ENCODE measurements at regions of chr15 and their contacts with region 1.

Region 1: DNA sequence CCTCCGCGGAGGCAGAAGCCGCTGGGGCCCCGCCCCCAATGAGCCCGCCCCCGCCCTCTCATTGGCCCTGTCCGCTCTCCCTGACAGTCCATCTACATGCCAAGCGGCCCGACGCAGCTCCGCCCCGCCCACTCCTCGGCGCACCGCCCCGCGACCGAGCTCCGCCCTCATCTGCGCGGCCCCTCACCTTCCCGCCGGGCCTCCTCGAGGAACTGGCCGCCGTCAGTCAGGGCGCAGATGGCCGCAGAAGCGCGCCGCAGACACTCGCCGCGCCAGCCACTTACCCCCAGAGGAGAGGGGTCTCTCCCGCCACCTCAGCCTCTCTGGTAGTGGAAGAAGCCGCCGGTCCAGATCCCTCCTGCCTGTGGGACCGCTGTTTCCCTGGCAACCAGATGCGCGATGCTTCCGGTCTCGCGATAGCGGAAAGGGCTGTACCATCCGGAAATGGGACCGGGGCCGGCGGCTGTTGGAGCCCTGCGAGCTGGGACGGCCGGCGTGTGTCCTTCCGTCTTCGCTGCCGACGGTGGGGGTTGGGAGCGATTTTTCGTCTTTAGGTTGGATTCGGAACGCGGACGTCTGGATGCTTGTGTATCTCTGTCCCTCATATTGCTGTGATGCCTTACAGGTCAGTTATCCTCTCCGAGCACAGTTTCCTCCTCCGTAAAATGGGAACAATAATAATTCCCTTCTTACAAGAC is at the start of gene FSIP1:
- DNase-seq: peak; percentile 89 to 97 (median 93)
- ATAC-seq: peak; percentile 98
- H3K4me3 ChIP-seq: peak within 1 kb of the TSS; percentile 83
- H3K4me3 Mint-ChIP-seq: peak within 1 kb of the TSS; percentile 86
- H3K27ac ChIP-seq: peak within 1 kb of the TSS; percentile 66 to 83
- H3K27ac Mint-ChIP-seq: peak within 1 kb of the TSS; percentile 76
- H3K4me1 ChIP-seq: peaks cover 9% of the 10 kb centered on the region
- H3K4me1 Mint-ChIP-seq: peaks cover 56% of the 10 kb centered on the region
- H3K27me3 ChIP-seq: no peaks in the 10 kb centered on the region
- H3K27me3 Mint-ChIP-seq: no peaks in the 10 kb centered on the region
- CTCF ChIP-seq: no peak
- total RNA-seq, gene FSIP1: 0.22 to 0.34 TPM

Region 2: GRCh38 chr15:39874890-39875549 is 92.4 kb after region 1 on chr15:
- CTCF ChIA-PET with region 1: interaction called, 3 read pairs
- POLR2A ChIA-PET with region 1: no interaction called
- intact Hi-C with region 1: loop called (anchors 2 to 10 kb)
- DNase-seq: peak in 5 of 14 experiments; percentile 6 to 51 (median 24)
- ATAC-seq: no peak
- H3K4me3 ChIP-seq: no peak overlapping the region
- H3K4me3 Mint-ChIP-seq: no peak overlapping the region
- H3K27ac ChIP-seq: no peak overlapping the region
- H3K27ac Mint-ChIP-seq: no peak overlapping the region
- H3K4me1 ChIP-seq: no peaks in the 10 kb centered on the region
- H3K4me1 Mint-ChIP-seq: no peaks in the 10 kb centered on the region
- H3K27me3 ChIP-seq: peaks cover 0 to 8% of the 10 kb centered on the region in 2 experiments
- H3K27me3 Mint-ChIP-seq: peaks cover 4% of the 10 kb centered on the region
- CTCF ChIP-seq: peak; percentile 58

Region 3: GRCh38 chr15:39976291-39977274 is 194.0 kb after region 1 on chr15:
- CTCF ChIA-PET with region 1: no interaction called
- POLR2A ChIA-PET with region 1: no interaction called
- intact Hi-C with region 1: loop called in 1 of 2 experiments (anchors 10 kb)
- DNase-seq: peak in 6 of 14 experiments; percentile 1 to 43 (median 19)
- ATAC-seq: peak; percentile 43
- H3K4me3 ChIP-seq: peak overlapping the region; percentile 22
- H3K4me3 Mint-ChIP-seq: peak overlapping the region; percentile 77
- H3K27ac ChIP-seq: no peak overlapping the region
- H3K27ac Mint-ChIP-seq: no peak overlapping the region
- H3K4me1 ChIP-seq: no peaks in the 10 kb centered on the region
- H3K4me1 Mint-ChIP-seq: no peaks in the 10 kb centered on the region
- H3K27me3 ChIP-seq: no peaks in the 10 kb centered on the region
- H3K27me3 Mint-ChIP-seq: no peaks in the 10 kb centered on the region
- CTCF ChIP-seq: no peak

Region 4: DNA sequence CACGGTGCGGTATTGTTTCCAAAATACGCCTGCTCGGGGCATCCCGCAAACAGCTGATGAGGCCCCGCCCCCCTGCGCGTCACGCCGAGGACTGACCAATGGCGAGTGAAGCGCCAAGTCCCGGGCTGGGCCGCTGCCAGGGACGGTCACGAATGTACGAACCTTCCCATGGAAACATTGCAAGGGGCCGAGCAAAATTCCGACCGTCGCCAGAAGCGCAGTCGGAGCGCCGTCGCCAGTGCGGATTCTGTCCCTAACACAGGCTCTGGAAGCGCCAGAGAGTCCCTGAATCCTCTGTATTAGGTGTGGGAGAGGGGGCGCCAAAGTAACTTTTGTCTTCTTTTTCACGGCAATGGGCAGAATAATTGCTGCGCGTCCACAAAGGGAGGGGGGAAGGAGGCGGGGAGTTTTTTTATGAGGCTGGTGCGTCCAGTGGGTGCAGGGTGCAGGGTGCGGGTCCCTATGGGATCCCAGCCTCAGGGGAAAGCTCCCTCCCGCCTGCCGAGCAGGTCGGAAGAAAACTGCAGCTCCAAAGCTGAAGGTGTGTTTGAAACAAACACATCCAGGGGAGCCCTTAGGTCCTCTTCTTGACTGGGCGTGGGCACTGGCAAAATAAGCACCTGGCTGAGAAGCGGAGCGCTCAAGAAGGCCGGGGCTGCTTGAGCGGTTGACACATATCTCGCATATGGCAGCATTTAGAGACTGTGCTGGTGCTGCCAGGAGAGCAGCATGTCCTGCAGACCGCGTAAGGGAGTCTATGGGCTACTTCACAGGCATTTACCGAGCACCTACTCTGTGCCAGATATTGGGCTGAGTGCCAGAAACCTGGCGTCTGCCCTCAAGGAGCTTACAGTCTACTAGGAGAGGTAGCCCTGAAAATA is 326.5 kb after region 1 on chr15 and contains the start of gene BMF:
- CTCF ChIA-PET with region 1: no interaction called
- POLR2A ChIA-PET with region 1: interaction called, 3 read pairs
- intact Hi-C with region 1: loop called in 1 of 2 experiments (anchors 5 kb)
- DNase-seq: peak; percentile 93 to 99 (median 97)
- ATAC-seq: peak; percentile 80
- H3K4me3 ChIP-seq: peak within 1 kb of the TSS; percentile 88
- H3K4me3 Mint-ChIP-seq: peak within 1 kb of the TSS; percentile 89
- H3K27ac ChIP-seq: peak within 1 kb of the TSS in 1 of 2 donors; percentile 27
- H3K27ac Mint-ChIP-seq: peak within 1 kb of the TSS; percentile 58
- H3K4me1 ChIP-seq: peaks cover 51% of the 10 kb centered on the region
- H3K4me1 Mint-ChIP-seq: peaks cover 55% of the 10 kb centered on the region
- H3K27me3 ChIP-seq: no peaks in the 10 kb centered on the region
- H3K27me3 Mint-ChIP-seq: no peaks in the 10 kb centered on the region
- CTCF ChIP-seq: peak; percentile 38
- total RNA-seq, gene BMF: 13.5 to 13.9 TPM

Region 5: DNA sequence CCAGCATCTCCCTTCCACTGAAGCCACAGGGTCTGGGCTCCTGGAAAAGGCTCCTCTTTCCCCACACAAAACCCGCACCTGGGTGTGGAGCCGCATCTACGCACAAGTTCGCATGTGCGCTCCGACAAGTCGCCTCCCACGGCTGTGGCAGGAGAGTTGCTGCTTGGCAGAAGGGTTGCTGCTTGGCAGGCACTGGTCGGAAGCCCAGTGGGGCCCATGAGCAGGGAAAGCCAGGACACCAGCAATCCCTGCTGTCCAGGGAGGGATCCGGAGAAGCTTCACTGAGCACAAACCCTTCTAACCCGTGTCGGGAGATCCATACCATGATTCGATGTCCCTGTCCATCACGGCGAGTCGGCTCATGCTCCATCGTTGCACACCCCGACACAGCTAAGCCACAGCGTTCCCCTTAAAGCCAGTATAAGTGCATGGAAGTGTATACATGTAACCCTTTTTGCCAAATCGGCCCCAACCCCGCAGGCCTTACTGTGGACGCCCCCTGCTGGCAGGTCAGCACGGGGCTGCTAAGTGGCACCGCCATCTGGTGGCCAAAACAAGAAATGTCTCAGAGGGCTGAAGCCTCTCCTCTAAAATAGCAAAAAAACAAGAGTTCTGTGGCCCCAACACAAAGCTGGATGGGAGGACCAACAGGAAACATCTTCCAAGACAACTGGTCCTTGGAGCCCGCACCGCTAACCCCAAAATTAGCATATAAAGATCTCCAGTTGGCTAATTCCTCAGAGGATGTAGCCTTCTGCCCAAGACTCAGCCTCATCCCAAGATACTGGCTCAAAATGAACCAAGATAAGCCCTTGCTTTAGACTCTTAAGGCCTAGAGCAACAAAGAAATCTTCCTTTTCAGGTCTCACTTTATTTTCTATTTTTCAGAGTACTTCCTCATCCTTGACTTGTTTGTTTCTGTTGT is 492.0 kb after region 1 on chr15:
- CTCF ChIA-PET with region 1: interaction called, 6 read pairs
- POLR2A ChIA-PET with region 1: interaction called, 3 read pairs
- intact Hi-C with region 1: loop called in 1 of 2 experiments (anchors 1 kb)
- DNase-seq: peak; percentile 78 to 94 (median 86)
- ATAC-seq: peak; percentile 89
- H3K4me3 ChIP-seq: no peak overlapping the region
- H3K4me3 Mint-ChIP-seq: no peak overlapping the region
- H3K27ac ChIP-seq: no peak overlapping the region
- H3K27ac Mint-ChIP-seq: no peak overlapping the region
- H3K4me1 ChIP-seq: peaks cover 12% of the 10 kb centered on the region
- H3K4me1 Mint-ChIP-seq: peaks cover 12% of the 10 kb centered on the region
- H3K27me3 ChIP-seq: peaks cover 18 to 19% of the 10 kb centered on the region in 2 experiments
- H3K27me3 Mint-ChIP-seq: peaks cover 23% of the 10 kb centered on the region
- CTCF ChIP-seq: peak; percentile 100

Region 6: GRCh38 chr15:40382580-40383456 is 600.2 kb after region 1 on chr15 and contains the start of gene KNSTRN:
- CTCF ChIA-PET with region 1: no interaction called
- POLR2A ChIA-PET with region 1: no interaction called
- intact Hi-C with region 1: loop called in 1 of 2 experiments (anchors 10 kb)
- DNase-seq: peak; percentile 86 to 96 (median 90)
- ATAC-seq: peak; percentile 98
- H3K4me3 ChIP-seq: peak within 1 kb of the TSS; percentile 69
- H3K4me3 Mint-ChIP-seq: peak within 1 kb of the TSS; percentile 94
- H3K27ac ChIP-seq: no peak within 1 kb of the TSS
- H3K27ac Mint-ChIP-seq: no peak within 1 kb of the TSS
- H3K4me1 ChIP-seq: peaks cover 15% of the 10 kb centered on the region
- H3K4me1 Mint-ChIP-seq: peaks cover 15% of the 10 kb centered on the region
- H3K27me3 ChIP-seq: no peaks in the 10 kb centered on the region
- H3K27me3 Mint-ChIP-seq: no peaks in the 10 kb centered on the region
- CTCF ChIP-seq: no peak
- total RNA-seq, gene KNSTRN: 2.8 to 3.0 TPM

Region 7: DNA sequence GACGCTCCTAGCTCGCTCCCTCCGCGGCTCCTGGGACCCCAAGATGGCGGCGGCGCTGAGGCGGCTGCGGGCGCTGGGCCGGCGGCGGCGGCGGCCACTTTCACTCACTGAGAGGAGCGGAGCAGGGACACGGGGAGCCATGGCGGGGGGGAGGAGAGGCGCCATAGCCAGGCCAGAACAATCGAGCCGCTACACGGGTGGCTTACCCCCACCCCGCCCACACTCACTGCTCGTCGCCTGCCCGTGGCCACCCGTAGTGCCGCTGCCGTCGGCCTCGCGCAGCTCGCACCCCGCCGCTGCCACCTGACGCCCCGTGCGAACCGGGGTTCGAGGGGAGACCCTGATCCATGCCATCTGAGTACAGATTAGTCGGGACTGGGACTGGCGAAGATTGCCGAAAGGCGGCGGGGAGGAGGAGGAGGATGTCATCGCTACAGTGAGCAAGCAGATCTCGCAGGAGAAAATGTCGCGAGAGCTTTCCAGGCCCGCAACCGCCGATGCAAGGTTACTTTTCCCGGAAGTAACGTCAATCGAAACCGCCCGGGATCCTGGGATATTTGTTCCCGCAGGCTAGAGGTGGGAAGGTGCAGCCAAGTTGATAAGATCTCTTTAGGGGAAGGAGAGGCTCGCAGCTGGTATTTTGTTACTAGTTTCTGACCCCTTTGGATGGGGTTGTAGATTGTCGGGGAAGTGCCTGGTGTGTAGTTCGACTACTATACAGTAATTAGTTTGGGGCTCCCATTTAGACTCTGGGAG is 1333.7 kb after region 1 on chr15 and contains the start of gene INO80:
- CTCF ChIA-PET with region 1: no interaction called
- POLR2A ChIA-PET with region 1: no interaction called
- intact Hi-C with region 1: loop called in 1 of 2 experiments (anchors 10 kb)
- DNase-seq: peak; percentile 90 to 98 (median 95)
- ATAC-seq: peak; percentile 79
- H3K4me3 ChIP-seq: peak within 1 kb of the TSS; percentile 99
- H3K4me3 Mint-ChIP-seq: peak within 1 kb of the TSS; percentile 93
- H3K27ac ChIP-seq: peak within 1 kb of the TSS; percentile 79 to 91
- H3K27ac Mint-ChIP-seq: peak within 1 kb of the TSS; percentile 98
- H3K4me1 ChIP-seq: peaks cover 20% of the 10 kb centered on the region
- H3K4me1 Mint-ChIP-seq: peaks cover 25% of the 10 kb centered on the region
- H3K27me3 ChIP-seq: no peaks in the 10 kb centered on the region
- H3K27me3 Mint-ChIP-seq: no peaks in the 10 kb centered on the region
- CTCF ChIP-seq: no peak
- total RNA-seq, gene INO80: 20.3 to 22.9 TPM

Measured in CD4-positive, alpha-beta T cell (primary cell).